ENCODE measurements at regions of chr6 and their contacts with region 1.

Region 1: DNA sequence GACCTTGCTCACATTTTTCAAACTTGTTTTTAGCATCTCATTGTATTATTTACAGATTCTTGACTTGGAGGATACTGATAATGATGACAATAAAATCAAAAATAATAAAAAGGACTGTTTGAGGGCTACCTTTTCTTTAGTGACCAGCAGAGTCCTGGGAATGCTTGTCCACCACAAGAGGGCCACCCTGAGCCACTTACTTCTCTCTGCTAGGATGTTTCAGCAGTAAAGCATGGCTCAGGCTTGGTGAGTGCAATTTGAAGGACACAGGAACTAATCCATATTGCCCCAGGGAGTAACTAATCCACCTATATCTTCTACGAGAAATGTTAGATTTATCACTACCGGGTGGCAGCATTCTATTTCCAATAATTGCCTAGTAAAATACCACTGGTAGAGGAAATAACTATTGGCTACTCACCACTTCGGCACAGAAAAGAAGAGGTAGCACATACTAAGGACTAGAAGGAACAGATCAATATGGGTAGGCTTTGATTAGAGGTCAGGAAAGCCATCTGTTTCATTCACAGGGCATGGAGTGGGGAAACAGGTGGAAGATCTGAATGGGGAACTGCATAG is 5.8 kb upstream of the KIAA0408 start:
- DNase-seq: peak; percentile 24 to 69
- ATAC-seq: peak; percentile 75 to 92 (median 85)
- H3K4me3 ChIP-seq: no peak overlapping the region
- H3K27ac ChIP-seq: peak overlapping the region in 3 of 10 donors; percentile 11 to 38 (median 17)
- H3K4me1 ChIP-seq: peaks cover 0 to 4% (median 0%) of the 10 kb centered on the region in 9 donors
- H3K27me3 ChIP-seq: no peaks in the 10 kb centered on the region
- CTCF ChIP-seq: peak; percentile 45 to 88 (median 78)

Region 2: DNA sequence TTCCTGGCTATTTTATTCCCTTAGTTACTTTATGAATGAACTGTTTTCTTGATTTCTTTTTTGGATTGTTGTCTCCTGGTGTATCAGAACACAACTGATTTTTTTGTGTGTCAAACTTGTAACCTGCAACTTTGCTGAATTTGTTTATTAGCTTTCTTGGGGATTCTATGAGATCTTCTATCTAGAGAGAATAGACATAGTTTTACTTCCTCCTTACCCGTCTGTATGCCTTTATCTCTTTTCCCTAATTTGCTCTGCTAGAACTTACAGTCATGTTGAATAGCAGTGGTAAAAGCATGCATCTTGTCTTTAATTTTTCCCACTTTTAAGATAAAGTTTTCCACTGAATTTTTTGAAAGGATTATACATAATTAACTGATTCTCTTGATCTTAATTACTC is 185.2 kb before region 1 on chr6:
- intact Hi-C with region 1: no loop called
- DNase-seq: no peak
- ATAC-seq: no peak
- H3K4me3 ChIP-seq: no peak overlapping the region
- H3K27ac ChIP-seq: no peak overlapping the region
- H3K4me1 ChIP-seq: peaks cover 0 to 57% (median 36%) of the 10 kb centered on the region in 9 donors
- H3K27me3 ChIP-seq: no peaks in the 10 kb centered on the region
- CTCF ChIP-seq: no peak

Region 3: DNA sequence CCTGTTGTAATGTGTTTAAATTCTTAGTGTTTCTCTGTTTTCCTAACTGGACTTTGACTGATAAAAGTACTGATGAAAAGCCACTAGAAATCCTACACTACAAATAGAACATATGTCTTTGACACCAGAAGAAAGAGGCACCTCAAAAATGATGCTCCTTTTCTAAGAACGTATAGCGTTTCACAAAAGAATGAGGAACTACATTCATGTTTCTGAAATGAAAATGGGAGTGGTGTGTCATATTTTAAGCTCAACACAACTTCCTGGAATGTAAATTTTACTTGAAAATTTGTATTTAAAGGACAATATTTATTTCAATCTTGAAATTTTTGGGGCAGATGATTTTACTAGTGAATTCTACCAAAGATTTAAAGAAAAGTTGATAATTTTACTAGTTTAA is 41.0 kb before region 1 on chr6:
- intact Hi-C with region 1: no loop called
- DNase-seq: no peak
- ATAC-seq: no peak
- H3K4me3 ChIP-seq: no peak overlapping the region
- H3K27ac ChIP-seq: no peak overlapping the region
- H3K4me1 ChIP-seq: peaks cover 0 to 15% (median 0%) of the 10 kb centered on the region in 9 donors
- H3K27me3 ChIP-seq: no peaks in the 10 kb centered on the region
- CTCF ChIP-seq: no peak

Region 4: GRCh38 chr6:127539272-127539671 is 74.3 kb after region 1 on chr6:
- intact Hi-C with region 1: loop called in 8 of 10 experiments (anchors 2 to 5 kb)
- DNase-seq: no peak
- ATAC-seq: no peak
- H3K4me3 ChIP-seq: no peak overlapping the region
- H3K27ac ChIP-seq: no peak overlapping the region
- H3K4me1 ChIP-seq: peaks cover 0 to 3% (median 0%) of the 10 kb centered on the region in 9 donors
- H3K27me3 ChIP-seq: peaks cover 0 to 9% (median 6%) of the 10 kb centered on the region in 7 donors
- CTCF ChIP-seq: peak in 7 of 9 donors; percentile 18 to 63 (median 49)

Region 5: GRCh38 chr6:127641905-127642304 is 176.9 kb after region 1 on chr6:
- intact Hi-C with region 1: loop called in 2 of 10 experiments (anchors 5 kb)
- DNase-seq: no peak
- ATAC-seq: peak in 1 of 8 donors; percentile 33
- H3K4me3 ChIP-seq: no peak overlapping the region
- H3K27ac ChIP-seq: no peak overlapping the region
- H3K4me1 ChIP-seq: no peaks in the 10 kb centered on the region
- H3K27me3 ChIP-seq: peaks cover 0 to 10% (median 0%) of the 10 kb centered on the region in 7 donors
- CTCF ChIP-seq: peak; percentile 10 to 58 (median 46)

Region 6: DNA sequence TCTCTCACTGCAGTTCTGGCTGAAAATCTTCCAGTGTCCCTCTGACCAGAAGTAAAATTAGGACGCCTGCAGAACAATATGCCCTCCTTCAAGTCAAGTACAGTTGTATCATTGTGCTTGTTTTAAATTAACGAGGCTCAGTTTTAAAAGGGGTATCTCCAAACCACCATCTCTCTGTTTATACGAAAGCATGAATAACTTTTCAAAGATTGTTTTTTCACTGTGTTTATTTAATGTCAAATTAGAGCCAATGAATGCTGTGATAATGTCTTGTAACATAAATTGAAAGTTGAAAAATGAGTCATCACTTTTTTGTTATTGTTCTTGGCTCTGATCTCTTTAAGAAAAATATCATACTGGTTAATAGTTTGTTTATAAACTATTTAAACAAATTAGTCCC is 666.6 kb after region 1 on chr6:
- intact Hi-C with region 1: no loop called
- DNase-seq: no peak
- ATAC-seq: peak in 4 of 8 donors; percentile 7 to 49 (median 24)
- H3K4me3 ChIP-seq: peak overlapping the region in 1 of 10 donors; percentile 21
- H3K27ac ChIP-seq: peak overlapping the region in 2 of 10 donors; percentile 18 to 46
- H3K4me1 ChIP-seq: peaks cover 0 to 29% (median 12%) of the 10 kb centered on the region in 9 donors
- H3K27me3 ChIP-seq: no peaks in the 10 kb centered on the region
- CTCF ChIP-seq: no peak

Measured in heart right ventricle (tissue), 16 donors.